Ovary (tissue), 10 donors: ENCODE measurements at regions of chr2 and their contacts with region 1.

Region 1: GRCh38 chr2:172113617-172114016 is 10.9 kb upstream of the DLX2 start:
- DNase-seq: no peak
- H3K4me3 ChIP-seq: no peak overlapping the region
- H3K27ac ChIP-seq: no peak overlapping the region
- H3K4me1 ChIP-seq: no peaks in the 10 kb centered on the region
- H3K27me3 ChIP-seq: no peaks in the 10 kb centered on the region
- CTCF ChIP-seq: peak; percentile 24 to 60 (median 57)
- EP300 ChIP-seq: no peak
- POLR2A ChIP-seq: no peak

Region 2: DNA sequence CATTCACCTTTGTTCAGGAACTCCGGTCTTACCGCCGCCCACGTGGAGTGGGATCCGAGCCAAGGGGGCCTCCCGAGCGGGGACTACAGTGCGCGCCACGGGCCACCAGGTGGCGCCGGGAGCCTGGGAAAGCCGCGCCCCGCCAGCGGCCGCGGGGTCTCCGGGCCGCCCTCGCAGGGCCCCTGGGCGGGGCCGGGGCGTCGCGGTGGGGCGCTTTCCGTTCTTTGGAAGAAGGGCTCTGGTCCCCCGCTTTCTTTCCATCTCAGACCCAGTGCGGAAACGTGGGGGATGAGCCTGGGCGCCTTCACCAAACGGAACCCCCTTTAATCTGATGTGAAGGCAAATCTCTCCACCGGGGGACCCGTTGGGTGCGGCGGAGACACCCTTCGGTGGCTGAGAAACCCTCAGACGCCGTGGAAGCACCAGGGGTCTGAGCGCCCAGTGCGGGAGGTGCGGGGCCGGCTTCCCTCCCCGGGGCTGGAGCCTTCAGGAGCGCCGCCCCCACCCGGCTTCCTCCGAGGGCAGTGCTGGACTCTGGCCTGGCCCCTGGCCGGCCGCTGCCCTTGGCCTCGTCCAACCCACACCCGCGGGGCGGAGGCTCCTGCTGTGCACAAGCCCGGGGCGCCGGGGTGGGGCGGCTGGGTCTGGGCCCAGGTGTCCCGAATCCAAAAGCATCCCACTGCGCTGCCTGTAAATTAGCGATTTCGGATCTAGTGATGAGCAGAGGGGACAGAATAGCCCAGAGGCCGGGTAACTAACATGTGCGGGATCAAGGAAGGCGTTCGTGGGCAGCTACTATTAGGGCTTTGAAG is 1139.9 kb before region 1 on chr2:
- intact Hi-C with region 1: loop called in 1 of 4 experiments (anchors 5 kb)
- DNase-seq: peak; percentile 83 to 93 (median 90)
- H3K4me3 ChIP-seq: peak overlapping the region; percentile 71
- H3K27ac ChIP-seq: peak overlapping the region; percentile 76 to 77
- H3K4me1 ChIP-seq: peaks cover 2% of the 10 kb centered on the region
- H3K27me3 ChIP-seq: no peaks in the 10 kb centered on the region
- CTCF ChIP-seq: peak; percentile 86 to 98 (median 98)
- EP300 ChIP-seq: no peak
- POLR2A ChIP-seq: no peak

Region 3: GRCh38 chr2:171598713-171599319 is 514.8 kb before region 1 on chr2:
- intact Hi-C with region 1: loop called in 1 of 4 experiments (anchors 10 kb)
- DNase-seq: peak in 1 of 5 donors; percentile 31
- H3K4me3 ChIP-seq: no peak overlapping the region
- H3K27ac ChIP-seq: no peak overlapping the region
- H3K4me1 ChIP-seq: no peaks in the 10 kb centered on the region
- H3K27me3 ChIP-seq: no peaks in the 10 kb centered on the region
- CTCF ChIP-seq: peak in 1 of 3 donors; percentile 43
- EP300 ChIP-seq: no peak
- POLR2A ChIP-seq: no peak